Activated CD4-positive, alpha-beta memory T cell treated with anti-CD3 and anti-CD28 coated beads, Interleukin-2, amount 10 ng/mL, durations not matched to agents 7 days and 5 days (primary cell): ENCODE measurements at regions of chr3 and their contacts with region 1.

Region 1: GRCh38 chr3:57852896-57853295 is 96.8 kb downstream of the SLMAP start:
- DNase-seq: no peak
- H3K4me3 Mint-ChIP-seq: no peak overlapping the region
- H3K27ac Mint-ChIP-seq: no peak overlapping the region
- H3K4me1 Mint-ChIP-seq: no peaks in the 10 kb centered on the region
- H3K27me3 Mint-ChIP-seq: no peaks in the 10 kb centered on the region

Region 2: GRCh38 chr3:57397175-57398026 is 455.5 kb before region 1 on chr3:
- CTCF ChIA-PET with region 1: interaction called, 18 read pairs
- POLR2A ChIA-PET with region 1: no interaction called
- DNase-seq: peak; percentile 67
- H3K4me3 Mint-ChIP-seq: no peak overlapping the region
- H3K27ac Mint-ChIP-seq: no peak overlapping the region
- H3K4me1 Mint-ChIP-seq: peaks cover 11% of the 10 kb centered on the region
- H3K27me3 Mint-ChIP-seq: peaks cover 18% of the 10 kb centered on the region

Region 3: DNA sequence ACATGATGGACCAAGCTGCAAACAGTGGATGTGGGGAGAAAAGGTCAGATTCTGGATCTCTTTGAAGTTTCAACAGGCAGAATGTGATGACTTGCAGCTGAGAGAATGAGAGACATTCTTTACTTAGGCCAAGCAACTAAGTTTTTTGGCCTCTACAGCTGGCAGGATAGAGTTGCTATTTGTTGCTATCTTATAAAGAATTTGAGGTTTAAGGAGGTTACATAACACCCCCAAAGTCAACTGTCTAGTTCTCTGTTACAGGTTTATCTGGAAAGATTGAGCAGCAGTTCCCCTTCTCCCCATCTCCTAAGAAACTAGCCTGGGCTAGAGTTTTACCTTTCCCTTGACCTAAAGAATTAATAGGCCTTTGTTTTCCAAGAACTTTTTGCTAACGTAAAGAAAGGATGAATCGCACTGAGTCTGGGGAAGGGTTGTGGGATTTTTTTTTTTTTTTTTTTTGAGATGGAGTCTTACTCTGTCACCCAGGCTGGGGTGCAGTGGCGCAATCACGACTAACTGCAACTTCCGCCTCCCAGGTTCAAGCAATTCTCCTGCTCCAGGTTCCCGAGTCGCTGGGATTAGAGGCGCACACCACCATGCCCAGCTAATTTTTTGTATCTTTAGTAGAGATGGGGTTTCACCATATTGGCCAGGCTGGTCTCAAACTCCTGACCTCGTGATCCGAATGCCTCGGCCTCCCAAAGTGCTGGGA is 123.4 kb before region 1 on chr3:
- CTCF ChIA-PET with region 1: no interaction called
- POLR2A ChIA-PET with region 1: no interaction called
- DNase-seq: no peak
- H3K4me3 Mint-ChIP-seq: no peak overlapping the region
- H3K27ac Mint-ChIP-seq: no peak overlapping the region
- H3K4me1 Mint-ChIP-seq: no peaks in the 10 kb centered on the region
- H3K27me3 Mint-ChIP-seq: peaks cover 2% of the 10 kb centered on the region